Activated T-helper 1 cell treated with anti-CD3 and anti-CD28 coated beads, Interleukin-12 subunit alpha, Interleukin-12 subunit beta, Interleukin-2, Interleukin-4 antibody, amounts not matched to agents 30 ng/mL and 10 ng/mL and 1 ng/mL, durations not matched to agents 14 hours and 24 hours and 36 hours (primary cell): ENCODE measurements at regions of chr11 and their contacts with region 1.

Region 1: DNA sequence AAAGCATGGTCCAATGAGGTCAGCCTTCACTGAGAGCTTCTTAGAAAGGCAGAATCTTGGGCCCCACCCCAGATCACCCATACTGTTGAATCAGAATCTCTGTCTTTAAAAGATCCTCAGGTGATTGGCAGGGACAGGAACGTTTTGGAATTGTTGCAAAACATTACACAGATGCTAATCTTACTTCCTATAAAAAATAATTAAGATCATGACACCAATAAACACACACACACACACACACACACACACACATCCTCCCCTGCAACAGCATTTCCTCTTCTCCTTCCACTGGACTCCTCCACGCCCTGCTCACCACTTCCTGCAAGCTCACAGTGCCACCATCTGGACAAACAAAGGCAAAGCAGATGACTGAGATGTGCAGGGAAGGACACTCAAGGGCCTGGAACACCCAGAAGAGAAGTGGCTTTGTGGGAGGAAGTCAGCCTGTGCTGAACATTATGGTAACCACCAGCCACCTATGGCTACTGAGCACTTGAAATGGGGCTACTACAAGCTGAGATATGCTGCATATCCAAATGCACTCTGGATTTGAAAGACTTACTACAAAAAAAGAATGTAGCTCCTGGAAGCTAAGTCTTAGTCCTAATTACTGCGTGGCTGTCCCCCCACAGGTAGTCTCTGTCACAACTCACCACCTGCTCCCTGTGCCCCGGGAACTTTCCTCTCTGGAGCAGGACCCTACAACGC is 65.6 kb downstream of the BTG4 start:
- DNase-seq: peak; percentile 73
- H3K4me3 Mint-ChIP-seq: no peak overlapping the region
- H3K27ac Mint-ChIP-seq: peak overlapping the region; percentile 46
- H3K4me1 Mint-ChIP-seq: peaks cover 21% of the 10 kb centered on the region
- H3K27me3 Mint-ChIP-seq: peaks cover 3% of the 10 kb centered on the region

Region 2: GRCh38 chr11:110463153-110463552 is 983.4 kb before region 1 on chr11:
- intact Hi-C with region 1: loop called (anchors 10 kb)
- DNase-seq: no peak
- H3K4me3 Mint-ChIP-seq: no peak overlapping the region
- H3K27ac Mint-ChIP-seq: no peak overlapping the region
- H3K4me1 Mint-ChIP-seq: no peaks in the 10 kb centered on the region
- H3K27me3 Mint-ChIP-seq: no peaks in the 10 kb centered on the region

Region 3: DNA sequence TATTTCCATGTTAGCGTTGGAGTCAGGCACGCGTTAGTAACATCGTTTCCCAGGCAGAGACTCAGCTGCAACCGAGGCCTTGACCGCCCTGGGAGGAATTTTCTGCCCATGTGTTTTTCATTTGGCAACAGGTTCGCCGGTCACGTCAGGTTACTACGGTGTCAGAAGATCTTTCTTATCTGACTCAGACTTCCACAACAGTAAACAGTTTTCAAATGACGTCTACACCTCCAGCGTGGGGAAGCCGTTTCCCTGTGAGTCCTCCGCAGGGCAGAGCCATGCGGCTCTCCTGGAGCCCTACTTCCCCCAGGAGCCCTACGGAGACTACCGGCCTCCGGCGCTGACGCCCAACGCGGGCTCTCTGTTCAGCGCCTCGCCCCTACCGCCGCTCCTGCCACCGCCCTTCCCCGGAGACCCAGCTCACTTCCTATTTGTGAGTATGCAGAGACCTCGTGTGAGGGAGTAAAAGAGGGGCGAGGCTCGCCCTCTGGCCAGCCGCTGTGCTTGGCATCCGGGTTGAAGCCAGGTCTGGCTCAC is 162.5 kb before region 1 on chr11:
- intact Hi-C with region 1: loop called (anchors 1 kb)
- DNase-seq: no peak
- H3K4me3 Mint-ChIP-seq: no peak overlapping the region
- H3K27ac Mint-ChIP-seq: no peak overlapping the region
- H3K4me1 Mint-ChIP-seq: no peaks in the 10 kb centered on the region
- H3K27me3 Mint-ChIP-seq: peaks cover 4% of the 10 kb centered on the region

Region 4: DNA sequence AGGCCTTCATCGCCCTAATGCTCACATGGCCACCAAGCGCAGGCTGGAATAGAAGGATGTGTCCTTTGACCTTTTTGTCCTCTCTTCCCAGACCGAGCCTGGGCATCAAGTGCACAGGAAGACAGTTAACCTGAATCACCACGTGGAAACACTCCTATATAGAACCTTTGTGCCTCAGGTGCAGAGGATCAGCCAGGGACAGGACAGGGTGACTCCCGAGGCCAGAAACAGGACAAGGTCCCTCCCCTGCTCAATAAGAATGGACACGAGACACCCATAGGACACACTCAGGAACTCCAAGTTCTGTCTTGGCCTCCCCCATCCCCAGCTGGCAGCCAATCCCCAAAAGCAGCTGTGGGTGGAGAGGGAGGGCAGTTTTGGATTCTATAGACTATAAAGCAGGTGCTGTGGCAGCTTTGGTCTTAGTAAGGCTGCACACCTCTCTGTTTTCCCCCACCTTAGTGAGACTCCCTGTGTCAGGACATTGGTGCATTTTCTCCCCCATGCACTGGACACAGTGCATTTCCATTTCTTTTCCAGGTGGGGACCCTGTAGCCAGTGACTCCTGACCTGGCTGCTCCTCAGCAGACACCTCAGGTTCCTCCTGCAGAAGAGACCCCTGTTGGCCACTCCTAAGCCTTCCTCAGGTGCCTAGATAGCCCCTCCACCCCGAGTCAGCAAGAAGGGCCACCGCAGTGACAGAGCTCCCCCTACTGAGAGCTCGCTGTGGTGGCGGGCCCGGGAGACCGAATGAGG is 23.9 kb before region 1 on chr11:
- intact Hi-C with region 1: loop called (anchors 1 kb)
- DNase-seq: peak; percentile 21
- H3K4me3 Mint-ChIP-seq: no peak overlapping the region
- H3K27ac Mint-ChIP-seq: peak overlapping the region; percentile 13
- H3K4me1 Mint-ChIP-seq: peaks cover 24% of the 10 kb centered on the region
- H3K27me3 Mint-ChIP-seq: no peaks in the 10 kb centered on the region

Region 5: DNA sequence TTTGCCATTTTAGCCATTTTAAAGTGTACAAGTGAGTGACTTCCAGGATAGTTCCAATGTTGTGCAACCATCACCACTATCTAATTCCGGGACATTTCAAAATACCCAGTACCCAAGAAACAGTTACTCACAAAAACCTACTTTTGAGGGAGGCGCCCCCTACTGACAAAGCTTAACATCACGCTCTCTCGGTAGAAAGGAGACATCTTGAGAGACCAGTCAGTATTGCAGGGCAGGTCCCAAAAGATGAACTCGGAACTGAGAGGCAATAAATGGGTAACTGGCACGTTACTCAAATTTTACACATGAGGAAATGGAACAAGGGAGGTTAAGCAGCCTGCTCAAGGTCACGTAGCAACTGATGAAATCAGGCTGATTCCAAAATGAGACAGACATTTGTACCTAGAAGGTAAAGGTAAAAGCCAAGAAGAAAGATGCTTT is 17.5 kb before region 1 on chr11:
- intact Hi-C with region 1: loop called (anchors 1 kb)
- DNase-seq: peak; percentile 40
- H3K4me3 Mint-ChIP-seq: no peak overlapping the region
- H3K27ac Mint-ChIP-seq: no peak overlapping the region
- H3K4me1 Mint-ChIP-seq: peaks cover 6% of the 10 kb centered on the region
- H3K27me3 Mint-ChIP-seq: peaks cover 6% of the 10 kb centered on the region